ENCODE measurements at regions of chr15 and their contacts with region 1.

Region 1: DNA sequence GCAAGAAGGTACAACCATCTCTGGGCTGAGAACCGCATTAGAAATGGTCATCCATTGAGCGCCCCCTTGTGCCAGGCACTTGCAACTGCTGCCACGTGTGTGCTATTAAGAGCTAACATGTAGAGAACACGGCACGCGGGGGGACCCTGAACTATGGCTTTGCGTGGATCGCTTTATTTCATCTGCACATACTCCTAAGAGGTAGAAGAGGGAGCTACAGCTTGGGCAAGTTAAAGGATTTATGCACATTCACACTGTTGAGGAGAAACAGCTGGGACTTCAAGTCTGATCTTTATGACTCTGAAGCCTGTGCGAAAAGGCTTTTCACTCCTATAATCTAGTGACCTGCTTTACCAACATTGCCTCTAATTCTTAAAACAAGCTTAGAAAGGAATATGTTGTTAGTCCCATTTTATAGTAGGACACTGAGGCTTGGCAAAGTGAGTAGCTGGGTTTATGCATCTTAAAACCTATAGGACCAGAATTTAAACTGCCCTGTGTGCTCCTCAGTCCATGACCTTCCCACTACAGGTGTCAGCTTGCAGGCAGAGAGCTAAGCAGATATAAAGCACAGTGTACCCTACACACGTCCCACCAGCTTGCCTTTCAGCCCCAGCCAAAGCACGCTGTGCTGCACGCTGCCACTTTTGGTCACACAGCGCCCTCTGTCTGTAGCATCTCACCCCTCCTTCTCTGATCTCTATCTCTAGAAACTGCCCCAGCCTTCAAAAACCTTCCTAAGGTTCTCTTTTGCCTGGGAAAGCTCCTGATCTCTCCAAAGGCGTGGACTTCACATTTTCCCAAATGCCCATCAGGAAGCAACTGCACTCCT is 57.8 kb downstream of the STARD5 start:
- DNase-seq: peak; percentile 64 to 81 (median 72)
- H3K4me3 ChIP-seq: peak overlapping the region in 1 of 3 experiments; percentile 44
- H3K4me3 Mint-ChIP-seq: peak overlapping the region; percentile 41 to 46
- H3K27ac ChIP-seq: no peak overlapping the region
- H3K27ac Mint-ChIP-seq: peak overlapping the region in 2 of 7 donors; percentile 19 to 61
- H3K4me1 ChIP-seq: peaks cover 12 to 23% of the 10 kb centered on the region in 2 donors
- H3K4me1 Mint-ChIP-seq: peaks cover 27% of the 10 kb centered on the region
- H3K27me3 ChIP-seq: peaks cover 2 to 3% of the 10 kb centered on the region in 2 donors
- H3K27me3 Mint-ChIP-seq: peaks cover 7 to 10% (median 10%) of the 10 kb centered on the region in 3 donors
- CTCF ChIP-seq: peak; percentile 86

Region 2: GRCh38 chr15:80455668-80456442 is 810.3 kb before region 1 on chr15:
- intact Hi-C with region 1: loop called in 1 of 2 experiments (anchors 10 kb)
- DNase-seq: peak; percentile 51 to 65 (median 60)
- H3K4me3 ChIP-seq: no peak overlapping the region
- H3K4me3 Mint-ChIP-seq: peak overlapping the region in 1 of 2 donors; percentile 48
- H3K27ac ChIP-seq: no peak overlapping the region
- H3K27ac Mint-ChIP-seq: no peak overlapping the region
- H3K4me1 ChIP-seq: no peaks in the 10 kb centered on the region
- H3K4me1 Mint-ChIP-seq: peaks cover 4% of the 10 kb centered on the region
- H3K27me3 ChIP-seq: peaks cover 22 to 47% of the 10 kb centered on the region in 2 donors
- H3K27me3 Mint-ChIP-seq: peaks cover 40 to 53% (median 42%) of the 10 kb centered on the region in 3 donors
- CTCF ChIP-seq: peak; percentile 88

Region 3: GRCh38 chr15:80977627-80978036 is 288.5 kb before region 1 on chr15:
- intact Hi-C with region 1: loop called (anchors 5 kb)
- DNase-seq: peak; percentile 44 to 58 (median 48)
- H3K4me3 ChIP-seq: no peak overlapping the region
- H3K4me3 Mint-ChIP-seq: no peak overlapping the region
- H3K27ac ChIP-seq: peak overlapping the region in 1 of 2 donors; percentile 24
- H3K27ac Mint-ChIP-seq: peak overlapping the region in 6 of 7 donors; percentile 14 to 78 (median 68)
- H3K4me1 ChIP-seq: no peaks in the 10 kb centered on the region
- H3K4me1 Mint-ChIP-seq: peaks cover 13% of the 10 kb centered on the region
- H3K27me3 ChIP-seq: no peaks in the 10 kb centered on the region
- H3K27me3 Mint-ChIP-seq: no peaks in the 10 kb centered on the region
- CTCF ChIP-seq: peak; percentile 72

Region 4: DNA sequence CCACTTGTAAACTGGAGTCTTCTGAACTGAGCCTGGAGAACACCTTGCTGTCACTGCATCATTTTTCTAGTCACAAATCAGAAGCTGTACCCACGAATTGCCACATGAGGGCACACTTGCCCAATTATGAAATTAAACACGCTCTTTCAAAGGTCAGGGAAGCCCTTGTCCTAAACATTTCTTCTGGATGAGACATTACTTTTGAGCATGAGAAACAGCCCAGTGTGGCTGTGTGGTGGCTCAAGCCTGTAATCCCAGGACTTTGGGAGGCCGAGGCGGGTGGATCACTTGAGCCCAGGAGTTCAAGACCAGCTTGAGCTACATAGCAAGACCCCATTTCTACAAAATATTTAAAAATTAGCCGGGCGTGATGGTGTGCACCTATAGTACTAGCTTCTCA is 159.6 kb before region 1 on chr15:
- intact Hi-C with region 1: loop called (anchors 2 kb)
- DNase-seq: peak; percentile 33 to 42 (median 35)
- H3K4me3 ChIP-seq: no peak overlapping the region
- H3K4me3 Mint-ChIP-seq: no peak overlapping the region
- H3K27ac ChIP-seq: no peak overlapping the region
- H3K27ac Mint-ChIP-seq: peak overlapping the region in 1 of 7 donors; percentile 36
- H3K4me1 ChIP-seq: no peaks in the 10 kb centered on the region
- H3K4me1 Mint-ChIP-seq: peaks cover 6% of the 10 kb centered on the region
- H3K27me3 ChIP-seq: peaks cover 0 to 3% of the 10 kb centered on the region in 2 donors
- H3K27me3 Mint-ChIP-seq: peaks cover 5 to 12% (median 8%) of the 10 kb centered on the region in 3 donors
- CTCF ChIP-seq: peak; percentile 81